B cell (primary cell): ENCODE measurements at regions of chr10 and their contacts with region 1.

Region 1: GRCh38 chr10:62816331-62817120 is at the start of gene EGR2:
- DNase-seq: peak; percentile 98
- ATAC-seq: peak; percentile 74
- H3K4me3 ChIP-seq: peak within 1 kb of the TSS; percentile 66 to 88 (median 72)
- H3K4me3 Mint-ChIP-seq: peak within 1 kb of the TSS; percentile 100
- H3K27ac ChIP-seq: peak within 1 kb of the TSS; percentile 77 to 84
- H3K27ac Mint-ChIP-seq: peak within 1 kb of the TSS; percentile 99
- H3K4me1 ChIP-seq: peaks cover 33 to 42% of the 10 kb centered on the region in 2 donors
- H3K4me1 Mint-ChIP-seq: peaks cover 54% of the 10 kb centered on the region
- H3K27me3 ChIP-seq: peaks cover 0 to 37% (median 9%) of the 10 kb centered on the region in 4 experiments
- H3K27me3 Mint-ChIP-seq: peaks cover 7% of the 10 kb centered on the region
- CTCF ChIP-seq: no peak
- total RNA-seq, gene EGR2: 6.3 and 6.6 TPM in 2 replicates

Region 2: GRCh38 chr10:62437696-62438095 is 378.8 kb before region 1 on chr10:
- CTCF ChIA-PET with region 1: interaction called, 53 read pairs
- POLR2A ChIA-PET with region 1: no interaction called
- intact Hi-C with region 1: loop called (anchors 2 kb)
- DNase-seq: peak; percentile 81
- ATAC-seq: peak; percentile 78
- H3K4me3 ChIP-seq: no peak overlapping the region
- H3K4me3 Mint-ChIP-seq: no peak overlapping the region
- H3K27ac ChIP-seq: no peak overlapping the region
- H3K27ac Mint-ChIP-seq: no peak overlapping the region
- H3K4me1 ChIP-seq: no peaks in the 10 kb centered on the region
- H3K4me1 Mint-ChIP-seq: peaks cover 3% of the 10 kb centered on the region
- H3K27me3 ChIP-seq: peaks cover 0 to 7% (median 2%) of the 10 kb centered on the region in 4 experiments
- H3K27me3 Mint-ChIP-seq: peaks cover 10% of the 10 kb centered on the region
- CTCF ChIP-seq: peak; percentile 93

Region 3: DNA sequence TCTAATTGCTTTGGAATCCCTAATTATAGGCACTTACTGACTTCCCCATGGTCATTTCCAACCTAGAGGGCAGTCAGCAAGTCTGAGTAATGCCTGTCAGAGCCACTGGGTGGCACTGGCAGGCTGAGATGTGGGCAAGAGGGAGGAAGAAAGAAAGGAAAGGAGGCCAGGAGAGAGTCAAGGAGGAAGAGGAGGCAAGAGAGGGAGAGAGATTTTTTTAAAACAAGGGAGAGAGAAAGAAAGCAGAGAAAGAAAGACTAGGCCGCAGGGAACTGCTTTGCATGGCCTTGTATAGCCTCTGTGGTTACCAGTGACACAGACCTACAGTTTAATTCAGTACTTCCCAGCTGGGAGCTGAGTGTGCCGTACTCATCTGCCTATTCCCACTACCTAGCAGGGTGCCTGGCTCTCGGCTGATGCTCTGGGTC is 222.4 kb before region 1 on chr10:
- CTCF ChIA-PET with region 1: interaction called, 64 read pairs
- POLR2A ChIA-PET with region 1: no interaction called
- intact Hi-C with region 1: loop called (anchors 1 kb)
- DNase-seq: peak; percentile 74
- ATAC-seq: peak; percentile 89
- H3K4me3 ChIP-seq: no peak overlapping the region
- H3K4me3 Mint-ChIP-seq: no peak overlapping the region
- H3K27ac ChIP-seq: no peak overlapping the region
- H3K27ac Mint-ChIP-seq: no peak overlapping the region
- H3K4me1 ChIP-seq: peaks cover 7 to 10% of the 10 kb centered on the region in 2 donors
- H3K4me1 Mint-ChIP-seq: peaks cover 7% of the 10 kb centered on the region
- H3K27me3 ChIP-seq: no peaks in the 10 kb centered on the region
- H3K27me3 Mint-ChIP-seq: no peaks in the 10 kb centered on the region
- CTCF ChIP-seq: peak; percentile 88

Region 4: GRCh38 chr10:62653254-62653653 is 163.3 kb before region 1 on chr10:
- CTCF ChIA-PET with region 1: interaction called, 6 read pairs
- POLR2A ChIA-PET with region 1: no interaction called
- intact Hi-C with region 1: loop called (anchors 2 kb)
- DNase-seq: peak; percentile 84
- ATAC-seq: peak; percentile 91
- H3K4me3 ChIP-seq: no peak overlapping the region
- H3K4me3 Mint-ChIP-seq: peak overlapping the region; percentile 12
- H3K27ac ChIP-seq: no peak overlapping the region
- H3K27ac Mint-ChIP-seq: peak overlapping the region; percentile 53
- H3K4me1 ChIP-seq: peaks cover 51 to 57% of the 10 kb centered on the region in 2 donors
- H3K4me1 Mint-ChIP-seq: peaks cover 56% of the 10 kb centered on the region
- H3K27me3 ChIP-seq: peaks cover 0 to 31% (median 2%) of the 10 kb centered on the region in 4 experiments
- H3K27me3 Mint-ChIP-seq: peaks cover 6% of the 10 kb centered on the region
- CTCF ChIP-seq: no peak

Region 5: GRCh38 chr10:62779487-62780248 is 36.9 kb before region 1 on chr10:
- CTCF ChIA-PET with region 1: interaction called, 7 read pairs
- POLR2A ChIA-PET with region 1: interaction called, 11 read pairs
- intact Hi-C with region 1: loop called (anchors 1 kb)
- DNase-seq: peak; percentile 91
- ATAC-seq: peak; percentile 99
- H3K4me3 ChIP-seq: peak overlapping the region in 1 of 5 experiments; percentile 21
- H3K4me3 Mint-ChIP-seq: peak overlapping the region; percentile 35
- H3K27ac ChIP-seq: peak overlapping the region; percentile 38 to 60
- H3K27ac Mint-ChIP-seq: peak overlapping the region; percentile 47
- H3K4me1 ChIP-seq: peaks cover 25 to 27% of the 10 kb centered on the region in 2 donors
- H3K4me1 Mint-ChIP-seq: peaks cover 33% of the 10 kb centered on the region
- H3K27me3 ChIP-seq: no peaks in the 10 kb centered on the region
- H3K27me3 Mint-ChIP-seq: no peaks in the 10 kb centered on the region
- CTCF ChIP-seq: no peak

Region 6: GRCh38 chr10:63157845-63158624 is 341.5 kb after region 1 on chr10:
- CTCF ChIA-PET with region 1: interaction called, 10 read pairs
- POLR2A ChIA-PET with region 1: interaction called, 3 read pairs
- intact Hi-C with region 1: loop called (anchors 1 kb)
- DNase-seq: peak; percentile 85
- ATAC-seq: peak; percentile 68
- H3K4me3 ChIP-seq: no peak overlapping the region
- H3K4me3 Mint-ChIP-seq: no peak overlapping the region
- H3K27ac ChIP-seq: no peak overlapping the region
- H3K27ac Mint-ChIP-seq: no peak overlapping the region
- H3K4me1 ChIP-seq: no peaks in the 10 kb centered on the region
- H3K4me1 Mint-ChIP-seq: peaks cover 9% of the 10 kb centered on the region
- H3K27me3 ChIP-seq: no peaks in the 10 kb centered on the region
- H3K27me3 Mint-ChIP-seq: no peaks in the 10 kb centered on the region
- CTCF ChIP-seq: peak; percentile 90